Endothelial cell of umbilical vein (primary cell): ENCODE measurements at regions of chr1 and their contacts with region 1.

Region 1: GRCh38 chr1:42439940-42440339 is 15.9 kb downstream of the ZMYND12 start:
- DNase-seq: peak; percentile 80
- H3K4me3 ChIP-seq: no peak overlapping the region
- H3K27ac ChIP-seq: no peak overlapping the region
- H3K4me1 ChIP-seq: peaks cover 12% of the 10 kb centered on the region
- H3K27me3 ChIP-seq: no peaks in the 10 kb centered on the region
- CTCF ChIP-seq: no peak
- POLR2A ChIP-seq: no peak

Region 2: GRCh38 chr1:42427240-42427639 is 12.7 kb before region 1 on chr1:
- CTCF ChIA-PET with region 1: interaction called, 4 read pairs
- POLR2A ChIA-PET with region 1: no interaction called
- dilution Hi-C with region 1: no loop called
- intact Hi-C with region 1: loop called (anchors 1 kb)
- DNase-seq: peak; percentile 80
- H3K4me3 ChIP-seq: no peak overlapping the region
- H3K27ac ChIP-seq: peak overlapping the region; percentile 57
- H3K4me1 ChIP-seq: peaks cover 12% of the 10 kb centered on the region
- H3K27me3 ChIP-seq: no peaks in the 10 kb centered on the region
- CTCF ChIP-seq: no peak
- POLR2A ChIP-seq: no peak

Region 3: GRCh38 chr1:42456010-42456758 is 16.2 kb after region 1 on chr1 and contains the starts of genes PPCS and ZMYND12:
- CTCF ChIA-PET with region 1: interaction called, 3 read pairs
- POLR2A ChIA-PET with region 1: no interaction called
- dilution Hi-C with region 1: no loop called
- intact Hi-C with region 1: loop called (anchors 2 kb)
- DNase-seq: peak; percentile 88
- H3K4me3 ChIP-seq: peak within 1 kb of the TSS; percentile 29 to 62 (median 59)
- H3K27ac ChIP-seq: peak within 1 kb of the TSS; percentile 46
- H3K4me1 ChIP-seq: peaks cover 5% of the 10 kb centered on the region
- H3K27me3 ChIP-seq: no peaks in the 10 kb centered on the region
- CTCF ChIP-seq: no peak
- POLR2A ChIP-seq: peak; percentile 89
- total RNA-seq, gene PPCS: 29.9 and 32.6 TPM in 2 replicates
- total RNA-seq, gene ZMYND12: 0.33 TPM in 1 of 2 replicates, not detected in the other

Region 4: DNA sequence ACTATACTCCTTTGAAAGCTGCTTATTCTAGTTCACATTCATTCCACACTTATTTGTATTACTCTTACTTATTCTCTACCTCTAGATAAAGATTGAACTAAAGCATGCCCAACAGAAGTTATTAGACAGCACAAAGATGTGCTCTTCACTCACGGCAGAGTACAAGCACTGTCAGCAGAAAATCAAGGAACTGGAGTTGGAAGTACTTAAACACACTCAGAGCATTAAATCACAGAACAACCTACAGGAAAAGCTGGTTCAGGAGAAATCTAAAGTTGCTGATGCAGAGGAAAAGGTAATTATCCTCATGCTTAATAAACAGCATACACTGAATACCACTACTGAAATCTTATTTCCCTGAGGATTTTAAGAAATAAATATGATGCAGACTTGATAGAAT is 137.0 kb after region 1 on chr1:
- CTCF ChIA-PET with region 1: no interaction called
- POLR2A ChIA-PET with region 1: no interaction called
- dilution Hi-C with region 1: no loop called
- intact Hi-C with region 1: no loop called
- DNase-seq: no peak
- H3K4me3 ChIP-seq: no peak overlapping the region
- H3K27ac ChIP-seq: no peak overlapping the region
- H3K4me1 ChIP-seq: no peaks in the 10 kb centered on the region
- H3K27me3 ChIP-seq: peaks cover 3 to 4% of the 10 kb centered on the region in 2 experiments
- CTCF ChIP-seq: no peak
- POLR2A ChIP-seq: no peak

Region 5: DNA sequence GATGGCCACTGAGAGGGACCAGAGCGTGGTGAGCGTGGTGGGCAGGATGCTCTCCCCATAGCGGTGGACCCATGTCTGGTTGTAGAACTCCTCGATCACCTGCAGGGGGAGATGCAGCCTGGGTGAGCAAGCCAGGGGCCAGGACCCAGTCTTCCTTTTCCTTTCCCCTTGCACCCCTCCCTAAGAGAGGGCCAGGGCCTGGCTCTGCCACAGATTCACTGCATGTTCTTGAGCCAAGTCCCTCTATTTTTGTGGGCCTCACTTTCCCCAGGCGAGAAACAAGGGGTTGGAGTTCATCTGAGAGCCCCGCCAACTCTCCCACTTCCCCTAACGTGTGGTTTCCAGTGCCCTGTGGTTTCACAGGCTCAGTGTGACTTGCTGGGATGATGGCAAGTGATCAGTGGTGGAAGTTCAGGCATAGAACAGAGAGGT is 491.2 kb after region 1 on chr1:
- CTCF ChIA-PET with region 1: no interaction called
- POLR2A ChIA-PET with region 1: no interaction called
- dilution Hi-C with region 1: no loop called
- intact Hi-C with region 1: no loop called
- DNase-seq: peak; percentile 16
- H3K4me3 ChIP-seq: no peak overlapping the region
- H3K27ac ChIP-seq: no peak overlapping the region
- H3K4me1 ChIP-seq: peaks cover 3% of the 10 kb centered on the region
- H3K27me3 ChIP-seq: no peaks in the 10 kb centered on the region
- CTCF ChIP-seq: peak; percentile 57 to 65
- POLR2A ChIP-seq: no peak